Activated CD8-positive, alpha-beta T cell treated with anti-CD3 and anti-CD28 coated beads, Interleukin-2, amount 10 ng/mL, durations not matched to agents 7 days and 5 days (primary cell): ENCODE measurements at regions of chr15 and their contacts with region 1.

Region 1: GRCh38 chr15:60592371-60593169 is 113.6 kb upstream of the ICE2 start:
- DNase-seq: peak; percentile 90
- ATAC-seq: peak; percentile 89
- H3K4me3 Mint-ChIP-seq: peak overlapping the region; percentile 82
- H3K27ac Mint-ChIP-seq: peak overlapping the region; percentile 83
- H3K4me1 Mint-ChIP-seq: peaks cover 58% of the 10 kb centered on the region
- H3K27me3 Mint-ChIP-seq: no peaks in the 10 kb centered on the region

Region 2: DNA sequence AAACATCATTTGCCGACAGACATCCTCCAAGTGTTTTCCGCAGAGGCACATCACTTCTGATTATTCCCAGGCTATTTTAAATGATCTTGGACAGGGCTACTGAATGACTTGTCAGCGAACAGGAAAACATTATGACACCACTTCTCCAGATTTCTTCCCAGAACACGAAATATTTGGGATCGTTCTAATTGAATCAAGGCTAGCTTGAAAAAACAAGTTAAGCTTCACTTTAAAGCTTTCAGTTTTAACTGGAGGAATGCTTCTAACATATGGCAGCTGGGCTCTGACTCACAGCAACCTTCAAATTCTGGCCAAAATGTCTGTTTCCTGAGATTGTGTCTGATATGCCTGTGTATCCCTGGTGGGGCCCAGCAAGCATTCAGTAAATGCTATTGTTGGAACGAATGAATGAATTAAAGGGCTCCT is 13.3 kb after region 1 on chr15:
- CTCF ChIA-PET with region 1: interaction called, 11 read pairs
- POLR2A ChIA-PET with region 1: no interaction called
- DNase-seq: no peak
- ATAC-seq: no peak
- H3K4me3 Mint-ChIP-seq: no peak overlapping the region
- H3K27ac Mint-ChIP-seq: no peak overlapping the region
- H3K4me1 Mint-ChIP-seq: peaks cover 18% of the 10 kb centered on the region
- H3K27me3 Mint-ChIP-seq: peaks cover 39% of the 10 kb centered on the region